Gastrocnemius medialis (tissue), 4 donors: ENCODE measurements at regions of chr3 and their contacts with region 1.

Region 1: GRCh38 chr3:136861890-136862616 is at the start of gene NCK1:
- DNase-seq: peak; percentile 98 to 99
- ATAC-seq: peak; percentile 91 to 92
- H3K4me3 ChIP-seq: peak within 1 kb of the TSS; percentile 79 to 96 (median 86)
- H3K27ac ChIP-seq: peak within 1 kb of the TSS; percentile 88 to 98 (median 94)
- H3K4me1 ChIP-seq: peaks cover 27 to 35% of the 10 kb centered on the region in 2 donors
- H3K27me3 ChIP-seq: no peaks in the 10 kb centered on the region
- CTCF ChIP-seq: peak in 4 of 5 experiments; percentile 11 to 22 (median 15)
- POLR2A ChIP-seq: peak; percentile 95
- total RNA-seq, gene NCK1: 23.5 to 36.6 (median 27.0) TPM

Region 2: GRCh38 chr3:136396916-136397315 is 465.1 kb before region 1 on chr3:
- in situ Hi-C with region 1: no loop called
- intact Hi-C with region 1: loop called (anchors 10 kb)
- DNase-seq: no peak
- ATAC-seq: no peak
- H3K4me3 ChIP-seq: no peak overlapping the region
- H3K27ac ChIP-seq: no peak overlapping the region
- H3K4me1 ChIP-seq: no peaks in the 10 kb centered on the region
- H3K27me3 ChIP-seq: no peaks in the 10 kb centered on the region
- CTCF ChIP-seq: no peak
- POLR2A ChIP-seq: no peak

Region 3: GRCh38 chr3:136734382-136735070 is 127.5 kb before region 1 on chr3:
- in situ Hi-C with region 1: no loop called
- intact Hi-C with region 1: no loop called
- DNase-seq: no peak
- ATAC-seq: no peak
- H3K4me3 ChIP-seq: no peak overlapping the region
- H3K27ac ChIP-seq: no peak overlapping the region
- H3K4me1 ChIP-seq: peaks cover 18 to 43% of the 10 kb centered on the region in 2 donors
- H3K27me3 ChIP-seq: no peaks in the 10 kb centered on the region
- CTCF ChIP-seq: no peak
- POLR2A ChIP-seq: no peak

Region 4: GRCh38 chr3:136929984-136930670 is 68.1 kb after region 1 on chr3:
- in situ Hi-C with region 1: no loop called
- intact Hi-C with region 1: loop called (anchors 10 kb)
- DNase-seq: peak; percentile 29 to 39
- ATAC-seq: peak; percentile 68 to 75
- H3K4me3 ChIP-seq: peak overlapping the region in 3 of 4 donors; percentile 2 to 44 (median 4)
- H3K27ac ChIP-seq: peak overlapping the region in 3 of 4 donors; percentile 32 to 62 (median 60)
- H3K4me1 ChIP-seq: peaks cover 24 to 27% of the 10 kb centered on the region in 2 donors
- H3K27me3 ChIP-seq: no peaks in the 10 kb centered on the region
- CTCF ChIP-seq: no peak
- POLR2A ChIP-seq: no peak